ENCODE measurements at regions of chr1 and their contacts with region 1.

Region 1: GRCh38 chr1:102191723-102192122 is 195.0 kb upstream of the OLFM3 start:
- DNase-seq: peak; percentile 19
- H3K4me3 Mint-ChIP-seq: no peak overlapping the region
- H3K27ac Mint-ChIP-seq: no peak overlapping the region
- H3K4me1 Mint-ChIP-seq: no peaks in the 10 kb centered on the region
- H3K27me3 Mint-ChIP-seq: no peaks in the 10 kb centered on the region
- CTCF ChIP-seq: no peak

Region 2: DNA sequence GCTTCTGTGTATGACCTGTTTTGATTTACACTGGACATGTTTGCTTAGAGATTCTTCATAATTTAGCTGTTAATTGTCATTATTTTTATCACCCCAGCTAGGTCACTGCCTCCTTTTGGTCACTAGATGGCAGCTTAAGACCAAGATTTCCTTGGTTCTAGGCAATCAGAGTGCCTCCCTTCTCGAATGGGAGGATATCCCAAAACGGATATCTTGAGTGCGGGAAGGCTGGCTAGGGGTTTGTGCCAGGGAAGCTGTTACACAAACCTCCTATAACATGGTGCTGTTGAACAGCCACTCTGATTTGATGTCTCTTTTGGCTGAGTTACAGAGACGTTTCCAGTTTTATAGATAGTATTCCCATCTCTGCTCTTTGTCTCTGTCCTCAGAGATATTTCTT is 671.4 kb before region 1 on chr1:
- CTCF ChIA-PET with region 1: no interaction called
- intact Hi-C with region 1: loop called (anchors 2 kb)
- DNase-seq: peak; percentile 2
- H3K4me3 Mint-ChIP-seq: no peak overlapping the region
- H3K27ac Mint-ChIP-seq: no peak overlapping the region
- H3K4me1 Mint-ChIP-seq: no peaks in the 10 kb centered on the region
- H3K27me3 Mint-ChIP-seq: no peaks in the 10 kb centered on the region
- CTCF ChIP-seq: peak; percentile 23

Region 3: GRCh38 chr1:101653482-101653946 is 538.2 kb before region 1 on chr1:
- CTCF ChIA-PET with region 1: no interaction called
- intact Hi-C with region 1: loop called (anchors 5 kb)
- DNase-seq: peak; percentile 28
- H3K4me3 Mint-ChIP-seq: no peak overlapping the region
- H3K27ac Mint-ChIP-seq: no peak overlapping the region
- H3K4me1 Mint-ChIP-seq: no peaks in the 10 kb centered on the region
- H3K27me3 Mint-ChIP-seq: no peaks in the 10 kb centered on the region
- CTCF ChIP-seq: no peak

Region 4: GRCh38 chr1:101820071-101820470 is 371.7 kb before region 1 on chr1:
- CTCF ChIA-PET with region 1: no interaction called
- intact Hi-C with region 1: loop called (anchors 1 kb)
- DNase-seq: no peak
- H3K4me3 Mint-ChIP-seq: no peak overlapping the region
- H3K27ac Mint-ChIP-seq: no peak overlapping the region
- H3K4me1 Mint-ChIP-seq: no peaks in the 10 kb centered on the region
- H3K27me3 Mint-ChIP-seq: no peaks in the 10 kb centered on the region
- CTCF ChIP-seq: no peak

Region 5: GRCh38 chr1:101938681-101939080 is 253.0 kb before region 1 on chr1:
- CTCF ChIA-PET with region 1: no interaction called
- intact Hi-C with region 1: loop called (anchors 2 kb)
- DNase-seq: no peak
- H3K4me3 Mint-ChIP-seq: no peak overlapping the region
- H3K27ac Mint-ChIP-seq: no peak overlapping the region
- H3K4me1 Mint-ChIP-seq: no peaks in the 10 kb centered on the region
- H3K27me3 Mint-ChIP-seq: no peaks in the 10 kb centered on the region
- CTCF ChIP-seq: no peak

Region 6: DNA sequence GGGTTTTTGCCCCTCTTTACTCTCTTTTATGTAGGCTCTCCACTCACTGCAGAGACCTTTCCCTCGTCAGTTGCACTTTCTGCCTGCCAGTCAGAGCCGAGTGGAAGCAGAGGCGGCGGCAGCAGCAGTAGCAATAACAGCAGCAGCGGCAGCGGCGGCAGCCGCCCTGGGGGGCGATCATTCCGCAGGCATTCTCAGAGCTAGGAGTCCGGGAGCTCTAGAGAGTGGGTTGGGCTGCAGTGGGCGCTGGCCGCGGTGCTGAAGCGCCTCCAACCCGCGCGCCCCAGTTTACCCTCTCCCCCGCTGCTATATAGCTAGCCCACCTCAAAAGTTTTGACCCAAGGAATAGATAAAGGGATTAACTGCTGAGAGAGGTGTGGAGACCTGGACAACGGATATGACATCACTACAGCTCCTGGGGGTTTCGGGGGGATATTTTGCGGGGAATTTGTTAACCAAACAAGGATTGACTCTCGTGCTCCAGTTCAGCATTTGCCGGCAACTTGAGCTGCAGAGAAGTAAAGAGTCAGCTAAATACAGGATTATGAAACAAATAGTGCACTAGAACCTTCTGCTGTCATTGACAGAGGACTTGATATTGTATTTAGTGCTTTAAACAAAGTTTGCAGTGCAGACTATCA is 194.8 kb before region 1 on chr1 and contains the start of gene OLFM3:
- CTCF ChIA-PET with region 1: no interaction called
- intact Hi-C with region 1: loop called (anchors 1 kb)
- DNase-seq: peak; percentile 22
- H3K4me3 Mint-ChIP-seq: peak within 1 kb of the TSS; percentile 53
- H3K27ac Mint-ChIP-seq: no peak within 1 kb of the TSS
- H3K4me1 Mint-ChIP-seq: no peaks in the 10 kb centered on the region
- H3K27me3 Mint-ChIP-seq: no peaks in the 10 kb centered on the region
- CTCF ChIP-seq: no peak
- total RNA-seq, gene OLFM3: not detected in 2 replicates